ENCODE measurements at regions of chr22 and their contacts with region 1.

Region 1: GRCh38 chr22:35627264-35628041 is 10.3 kb upstream of the MB start:
- DNase-seq: peak; percentile 82 to 93 (median 88)
- H3K4me3 ChIP-seq: peak overlapping the region; percentile 45 to 83 (median 56)
- H3K27ac ChIP-seq: peak overlapping the region in 4 of 5 donors; percentile 69 to 86 (median 82)
- H3K4me1 ChIP-seq: peaks cover 0 to 13% of the 10 kb centered on the region in 2 donors
- H3K27me3 ChIP-seq: no peaks in the 10 kb centered on the region
- CTCF ChIP-seq: peak; percentile 15 to 62 (median 46)
- POLR2A ChIP-seq: peak in 1 of 2 donors; percentile 57

Region 2: DNA sequence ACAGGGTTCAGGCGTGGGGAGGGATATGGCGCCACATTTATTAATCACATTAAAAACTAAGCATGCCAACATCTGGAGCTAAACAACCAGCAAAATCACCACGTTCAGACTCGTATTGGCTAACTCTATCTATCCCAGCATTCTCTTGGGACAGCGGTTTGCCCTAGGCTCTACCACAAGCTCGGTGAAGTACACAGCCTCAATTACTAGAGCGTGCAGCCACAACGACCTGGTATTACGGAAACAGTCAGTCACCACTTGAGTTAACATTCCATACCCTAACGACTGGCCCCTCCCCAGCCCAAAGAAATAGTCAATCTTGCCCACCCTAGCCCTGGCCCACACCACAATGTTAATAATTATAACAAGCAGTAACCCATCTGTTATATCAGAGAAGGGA is 122.4 kb after region 1 on chr22:
- intact Hi-C with region 1: loop called in 1 of 2 experiments (anchors 10 kb)
- DNase-seq: no peak
- H3K4me3 ChIP-seq: no peak overlapping the region
- H3K27ac ChIP-seq: no peak overlapping the region
- H3K4me1 ChIP-seq: peaks cover 0 to 7% of the 10 kb centered on the region in 2 donors
- H3K27me3 ChIP-seq: no peaks in the 10 kb centered on the region
- CTCF ChIP-seq: no peak
- POLR2A ChIP-seq: no peak

Region 3: DNA sequence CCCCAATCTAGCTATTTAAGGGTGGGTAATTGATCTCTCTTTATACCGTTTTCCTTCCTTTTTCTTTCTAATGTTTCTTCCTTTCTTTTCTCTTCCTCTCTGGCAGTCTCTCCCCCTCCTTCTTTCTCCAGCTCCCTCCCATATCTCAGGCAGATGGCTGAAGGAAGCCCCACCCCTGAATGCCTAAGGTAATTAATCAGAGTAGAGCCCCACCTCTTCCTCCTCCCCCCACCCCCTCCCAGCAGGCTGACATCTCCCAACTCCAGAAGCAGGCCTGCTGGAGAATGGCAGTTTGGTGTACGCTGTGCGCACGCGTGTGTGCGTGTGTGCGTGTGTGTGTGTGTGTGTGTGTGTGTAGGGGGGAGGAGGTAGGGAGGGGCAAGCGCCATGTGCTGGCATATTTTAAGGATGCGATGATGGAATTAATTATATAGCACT is 212.9 kb after region 1 on chr22:
- intact Hi-C with region 1: loop called in 1 of 2 experiments (anchors 5 kb)
- DNase-seq: peak; percentile 90 to 96 (median 91)
- H3K4me3 ChIP-seq: peak overlapping the region in 2 of 4 donors; percentile 27 to 51
- H3K27ac ChIP-seq: peak overlapping the region in 3 of 5 donors; percentile 45 to 64 (median 56)
- H3K4me1 ChIP-seq: peaks cover 18 to 50% of the 10 kb centered on the region in 2 donors
- H3K27me3 ChIP-seq: no peaks in the 10 kb centered on the region
- CTCF ChIP-seq: peak in 2 of 6 experiments; percentile 17 to 23
- POLR2A ChIP-seq: peak; percentile 21 to 80

Region 4: DNA sequence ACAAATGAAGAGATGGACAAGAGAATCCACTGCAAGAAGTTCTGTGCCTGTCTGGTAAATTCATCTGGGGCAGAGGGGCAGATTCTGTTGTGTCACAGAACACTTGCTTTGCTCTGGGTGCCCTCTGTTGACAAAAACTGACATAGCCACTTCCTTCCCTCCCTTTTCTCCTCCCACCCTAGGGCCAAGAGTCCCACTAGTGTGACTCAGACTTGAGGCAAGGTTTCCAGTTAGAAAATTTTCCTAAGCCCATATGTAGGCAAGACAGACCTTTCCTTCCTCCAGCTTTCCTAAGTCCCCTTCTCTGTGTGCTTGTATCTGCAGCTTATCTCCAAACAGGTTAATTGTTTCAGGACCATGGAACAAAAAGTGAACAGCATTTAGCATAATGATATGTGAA is 294.3 kb after region 1 on chr22:
- intact Hi-C with region 1: loop called in 1 of 2 experiments (anchors 2 kb)
- DNase-seq: peak; percentile 78 to 91 (median 86)
- H3K4me3 ChIP-seq: no peak overlapping the region
- H3K27ac ChIP-seq: peak overlapping the region; percentile 46 to 73 (median 59)
- H3K4me1 ChIP-seq: peaks cover 6 to 19% of the 10 kb centered on the region in 2 donors
- H3K27me3 ChIP-seq: no peaks in the 10 kb centered on the region
- CTCF ChIP-seq: peak; percentile 41 to 75 (median 70)
- POLR2A ChIP-seq: peak in 1 of 2 donors; percentile 14

Region 5: GRCh38 chr22:36123673-36124630 is 496.5 kb after region 1 on chr22:
- intact Hi-C with region 1: loop called (anchors 2 to 10 kb)
- DNase-seq: peak; percentile 94 to 98 (median 96)
- H3K4me3 ChIP-seq: peak overlapping the region in 1 of 4 donors; percentile 19
- H3K27ac ChIP-seq: peak overlapping the region; percentile 33 to 93 (median 70)
- H3K4me1 ChIP-seq: peaks cover 0 to 4% of the 10 kb centered on the region in 2 donors
- H3K27me3 ChIP-seq: no peaks in the 10 kb centered on the region
- CTCF ChIP-seq: peak; percentile 98 to 99 (median 98)
- POLR2A ChIP-seq: peak in 1 of 2 donors; percentile 44

Measured in adrenal gland (tissue), 19 donors.